ENCODE measurements at regions of chr12 and their contacts with region 1.

Region 1: GRCh38 chr12:54300732-54301427 is at the start of gene NFE2:
- DNase-seq: peak; percentile 86
- ATAC-seq: peak; percentile 94
- H3K4me3 Mint-ChIP-seq: peak within 1 kb of the TSS; percentile 68
- H3K27ac Mint-ChIP-seq: peak within 1 kb of the TSS; percentile 90
- H3K4me1 Mint-ChIP-seq: peaks cover 53% of the 10 kb centered on the region
- H3K27me3 Mint-ChIP-seq: peaks cover 15% of the 10 kb centered on the region
- CTCF ChIP-seq: no peak
- total RNA-seq, gene NFE2: 2.4 to 3.0 TPM (median 3.0 TPM) in 3 replicates

Region 2: DNA sequence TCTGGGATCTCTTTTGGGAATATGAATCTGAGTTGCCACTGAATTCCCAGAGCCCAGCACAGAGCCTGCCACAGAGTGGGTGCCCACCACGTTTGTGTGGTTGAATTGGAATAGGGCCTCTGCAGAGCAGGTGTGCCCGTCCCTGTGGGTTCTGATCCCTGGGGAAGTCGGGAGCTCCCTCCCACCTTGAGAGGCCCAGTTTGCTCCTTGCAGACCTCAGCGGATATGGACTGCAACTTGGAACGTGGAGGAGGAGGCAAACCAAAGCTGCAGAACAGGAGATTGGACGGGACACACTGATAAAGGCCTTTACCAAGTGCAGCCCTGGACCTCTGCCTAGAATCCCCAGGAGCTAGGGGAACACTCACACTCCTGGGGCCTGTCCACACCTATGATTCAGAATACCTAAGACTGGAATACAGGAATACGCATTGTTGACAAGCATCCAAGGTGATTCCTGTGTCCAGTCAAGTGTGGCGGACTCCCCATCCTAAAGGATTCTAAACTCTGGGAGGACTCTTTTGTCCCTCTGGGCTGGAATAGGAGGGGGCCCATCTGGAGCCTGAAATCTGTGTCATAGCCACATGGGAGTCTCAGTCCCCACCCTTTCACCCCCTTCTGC is 1526.1 kb before region 1 on chr12:
- CTCF ChIA-PET with region 1: no interaction called
- POLR2A ChIA-PET with region 1: no interaction called
- DNase-seq: no peak
- ATAC-seq: no peak
- H3K4me3 Mint-ChIP-seq: no peak overlapping the region
- H3K27ac Mint-ChIP-seq: no peak overlapping the region
- H3K4me1 Mint-ChIP-seq: no peaks in the 10 kb centered on the region
- H3K27me3 Mint-ChIP-seq: peaks cover 4% of the 10 kb centered on the region
- CTCF ChIP-seq: no peak

Region 3: GRCh38 chr12:54279866-54280467 is 20.9 kb before region 1 on chr12 and contains the start of gene CBX5:
- CTCF ChIA-PET with region 1: no interaction called
- POLR2A ChIA-PET with region 1: interaction called, 12 read pairs
- DNase-seq: peak; percentile 99
- ATAC-seq: peak; percentile 53
- H3K4me3 Mint-ChIP-seq: no peak within 1 kb of the TSS
- H3K27ac Mint-ChIP-seq: no peak within 1 kb of the TSS
- H3K4me1 Mint-ChIP-seq: peaks cover 58% of the 10 kb centered on the region
- H3K27me3 Mint-ChIP-seq: no peaks in the 10 kb centered on the region
- CTCF ChIP-seq: no peak
- total RNA-seq, gene CBX5: 182 to 218 TPM (median 216 TPM) in 3 replicates

Region 4: GRCh38 chr12:54285150-54286041 is 15.5 kb before region 1 on chr12:
- CTCF ChIA-PET with region 1: interaction called, 6 read pairs
- POLR2A ChIA-PET with region 1: interaction called, 14 read pairs
- DNase-seq: no peak
- ATAC-seq: no peak
- H3K4me3 Mint-ChIP-seq: peak overlapping the region; percentile 10
- H3K27ac Mint-ChIP-seq: peak overlapping the region; percentile 81
- H3K4me1 Mint-ChIP-seq: peaks cover 41% of the 10 kb centered on the region
- H3K27me3 Mint-ChIP-seq: no peaks in the 10 kb centered on the region
- CTCF ChIP-seq: no peak

Measured in WTC11 (cell line).